ENCODE measurements at regions of chr5 and their contacts with region 1.

Region 1: GRCh38 chr5:122192497-122193496 is 63.5 kb downstream of the ZNF474 start:
- DNase-seq: peak; percentile 7 to 39
- H3K4me3 ChIP-seq: no peak overlapping the region
- H3K27ac ChIP-seq: no peak overlapping the region
- H3K4me1 ChIP-seq: no peaks in the 10 kb centered on the region
- H3K27me3 ChIP-seq: no peaks in the 10 kb centered on the region
- CTCF ChIP-seq: peak; percentile 73

Region 2: GRCh38 chr5:121867401-121867800 is 325.4 kb before region 1 on chr5:
- CTCF ChIA-PET with region 1: no interaction called
- POLR2A ChIA-PET with region 1: no interaction called
- intact Hi-C with region 1: no loop called
- DNase-seq: no peak
- H3K4me3 ChIP-seq: no peak overlapping the region
- H3K27ac ChIP-seq: no peak overlapping the region
- H3K4me1 ChIP-seq: 0 out of 2 replicates have a peak, but pooled peaks cover 4% of the 10 kb centered on the region
- H3K27me3 ChIP-seq: no peaks in the 10 kb centered on the region
- CTCF ChIP-seq: no peak

Region 3: GRCh38 chr5:122170620-122171019 is 22.2 kb before region 1 on chr5:
- CTCF ChIA-PET with region 1: interaction called, 11 read pairs
- POLR2A ChIA-PET with region 1: no interaction called
- intact Hi-C with region 1: no loop called
- DNase-seq: peak in 1 of 2 experiments; percentile 18
- H3K4me3 ChIP-seq: no peak overlapping the region
- H3K27ac ChIP-seq: no peak overlapping the region
- H3K4me1 ChIP-seq: no peaks in the 10 kb centered on the region
- H3K27me3 ChIP-seq: no peaks in the 10 kb centered on the region
- CTCF ChIP-seq: no peak

Region 4: GRCh38 chr5:122236270-122237040 is 43.7 kb after region 1 on chr5:
- CTCF ChIA-PET with region 1: no interaction called
- POLR2A ChIA-PET with region 1: no interaction called
- intact Hi-C with region 1: no loop called
- DNase-seq: no peak
- H3K4me3 ChIP-seq: no peak overlapping the region
- H3K27ac ChIP-seq: no peak overlapping the region
- H3K4me1 ChIP-seq: no peaks in the 10 kb centered on the region
- H3K27me3 ChIP-seq: no peaks in the 10 kb centered on the region
- CTCF ChIP-seq: no peak

Region 5: DNA sequence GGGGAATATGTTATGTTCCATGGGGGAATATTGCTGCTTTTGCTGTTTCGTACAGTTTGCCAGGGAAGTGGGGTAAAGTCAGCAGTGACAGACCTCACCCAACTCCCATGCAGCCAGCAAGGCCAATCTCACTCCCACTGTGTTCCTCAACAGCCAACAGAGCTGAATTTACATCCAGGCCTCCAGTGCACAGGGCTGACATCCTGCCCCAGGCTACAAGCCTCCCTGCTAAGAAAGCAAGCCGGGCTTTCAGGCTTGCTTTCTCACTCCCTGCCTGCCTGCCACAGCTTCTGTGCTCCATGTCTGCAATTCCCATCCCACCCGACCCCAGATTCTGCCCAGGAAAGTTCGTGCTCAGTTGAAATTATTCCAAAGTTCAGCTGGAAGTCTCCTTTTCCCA is 93.7 kb after region 1 on chr5:
- CTCF ChIA-PET with region 1: no interaction called
- POLR2A ChIA-PET with region 1: no interaction called
- intact Hi-C with region 1: no loop called
- DNase-seq: no peak
- H3K4me3 ChIP-seq: no peak overlapping the region
- H3K27ac ChIP-seq: no peak overlapping the region
- H3K4me1 ChIP-seq: no peaks in the 10 kb centered on the region
- H3K27me3 ChIP-seq: no peaks in the 10 kb centered on the region
- CTCF ChIP-seq: no peak

Region 6: DNA sequence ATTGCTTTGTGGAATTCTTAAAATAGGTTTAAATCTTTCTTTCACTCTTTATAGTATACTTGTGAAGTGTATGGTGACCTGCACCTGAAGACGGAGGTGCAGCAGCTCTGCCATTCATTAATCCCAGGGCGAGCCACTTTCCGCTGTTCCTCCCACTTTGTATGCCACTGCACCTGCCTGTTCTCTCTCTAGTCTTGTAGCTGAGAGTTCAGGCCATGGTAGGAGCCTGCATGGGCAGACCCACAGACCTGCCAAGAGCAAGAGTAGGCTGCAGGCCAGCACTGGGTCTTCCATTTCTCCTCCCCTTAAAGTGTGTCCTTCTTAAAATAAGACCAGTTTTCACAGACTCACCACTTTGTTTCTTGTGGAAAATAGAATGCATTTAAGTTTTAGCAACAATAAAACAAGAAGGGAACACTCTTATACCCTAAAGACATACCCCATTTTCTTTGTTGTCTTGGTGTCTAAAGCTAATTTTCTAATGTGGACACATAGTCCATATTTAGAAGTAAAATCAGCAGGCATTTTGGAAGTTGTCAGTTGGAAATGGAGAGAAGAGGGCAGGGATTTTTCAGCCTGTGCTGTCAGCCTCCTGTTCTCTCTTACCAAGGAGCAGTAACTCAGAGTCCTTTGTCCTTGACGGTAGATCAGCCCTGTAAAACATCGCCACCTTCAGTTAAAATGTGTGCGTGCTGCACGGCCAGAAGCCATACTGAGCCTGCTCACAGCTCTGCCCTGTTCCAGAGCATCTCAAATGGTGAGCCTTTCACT is 222.4 kb after region 1 on chr5:
- CTCF ChIA-PET with region 1: no interaction called
- POLR2A ChIA-PET with region 1: no interaction called
- intact Hi-C with region 1: loop called (anchors 2 kb)
- DNase-seq: peak in 1 of 2 experiments; percentile 2
- H3K4me3 ChIP-seq: no peak overlapping the region
- H3K27ac ChIP-seq: no peak overlapping the region
- H3K4me1 ChIP-seq: no peaks in the 10 kb centered on the region
- H3K27me3 ChIP-seq: peaks cover 3% of the 10 kb centered on the region; the same call in 1 of the 2 replicates
- CTCF ChIP-seq: peak; percentile 49; the same call in 1 of the 2 replicates

Region 7: GRCh38 chr5:122458278-122458872 is 265.6 kb after region 1 on chr5:
- CTCF ChIA-PET with region 1: no interaction called
- POLR2A ChIA-PET with region 1: no interaction called
- intact Hi-C with region 1: no loop called
- DNase-seq: no peak
- H3K4me3 ChIP-seq: no peak overlapping the region
- H3K27ac ChIP-seq: no peak overlapping the region
- H3K4me1 ChIP-seq: peaks cover 6% of the 10 kb centered on the region; the same call in 1 of the 2 replicates
- H3K27me3 ChIP-seq: no peaks in the 10 kb centered on the region
- CTCF ChIP-seq: peak; percentile 71

Region 8: GRCh38 chr5:122500245-122501075 is 307.7 kb after region 1 on chr5:
- CTCF ChIA-PET with region 1: no interaction called
- POLR2A ChIA-PET with region 1: no interaction called
- intact Hi-C with region 1: loop called (anchors 10 kb)
- DNase-seq: peak in 1 of 2 experiments; percentile 26
- H3K4me3 ChIP-seq: no peak overlapping the region
- H3K27ac ChIP-seq: no peak overlapping the region
- H3K4me1 ChIP-seq: no peaks in the 10 kb centered on the region
- H3K27me3 ChIP-seq: no peaks in the 10 kb centered on the region
- CTCF ChIP-seq: peak; percentile 58

Region 9: GRCh38 chr5:123371575-123372179 is 1178.9 kb after region 1 on chr5:
- CTCF ChIA-PET with region 1: no interaction called
- POLR2A ChIA-PET with region 1: no interaction called
- intact Hi-C with region 1: loop called (anchors 10 kb)
- DNase-seq: peak in 1 of 2 experiments; percentile 14
- H3K4me3 ChIP-seq: no peak overlapping the region
- H3K27ac ChIP-seq: no peak overlapping the region
- H3K4me1 ChIP-seq: no peaks in the 10 kb centered on the region
- H3K27me3 ChIP-seq: no peaks in the 10 kb centered on the region
- CTCF ChIP-seq: peak; percentile 59

Region 10: GRCh38 chr5:123605822-123606221 is 1413.0 kb after region 1 on chr5:
- CTCF ChIA-PET with region 1: no interaction called
- POLR2A ChIA-PET with region 1: no interaction called
- intact Hi-C with region 1: loop called (anchors 5 kb)
- DNase-seq: no peak
- H3K4me3 ChIP-seq: no peak overlapping the region
- H3K27ac ChIP-seq: no peak overlapping the region
- H3K4me1 ChIP-seq: no peaks in the 10 kb centered on the region
- H3K27me3 ChIP-seq: no peaks in the 10 kb centered on the region
- CTCF ChIP-seq: no peak